ENCODE measurements at regions of chr9 and their contacts with region 1.

Region 1: DNA sequence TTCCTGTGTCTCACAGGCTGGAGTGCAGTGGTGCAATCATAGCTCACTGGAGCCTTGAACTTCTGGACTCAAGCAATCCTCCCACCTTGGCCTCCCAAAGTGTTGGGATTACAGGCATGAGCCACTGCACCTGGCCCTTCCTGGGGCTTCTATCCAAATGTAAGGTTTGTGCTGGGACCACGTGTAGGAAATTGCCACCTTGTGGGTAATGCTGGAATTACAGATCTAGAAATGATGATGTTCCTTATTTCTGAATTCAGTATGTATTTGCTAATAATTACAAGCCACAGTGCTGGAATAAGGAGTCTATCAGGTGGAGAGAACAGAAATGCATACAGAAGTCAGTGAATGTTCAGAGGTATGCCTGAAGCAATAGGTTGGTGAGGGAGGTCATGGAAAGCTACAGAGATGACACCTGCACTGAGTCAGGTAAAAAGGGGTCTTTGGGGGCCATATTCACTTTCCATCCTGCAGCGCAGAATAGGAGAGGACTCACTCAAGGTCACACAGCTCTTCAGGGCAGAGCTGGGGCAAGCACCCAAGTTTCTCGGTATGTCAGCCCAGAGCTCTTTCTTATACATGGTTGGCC is 8.8 kb upstream of the IGFBPL1 start:
- DNase-seq: no peak

Region 2: GRCh38 chr9:38233343-38233742 is 199.7 kb before region 1 on chr9:
- intact Hi-C with region 1: no loop called
- DNase-seq: no peak

Region 3: DNA sequence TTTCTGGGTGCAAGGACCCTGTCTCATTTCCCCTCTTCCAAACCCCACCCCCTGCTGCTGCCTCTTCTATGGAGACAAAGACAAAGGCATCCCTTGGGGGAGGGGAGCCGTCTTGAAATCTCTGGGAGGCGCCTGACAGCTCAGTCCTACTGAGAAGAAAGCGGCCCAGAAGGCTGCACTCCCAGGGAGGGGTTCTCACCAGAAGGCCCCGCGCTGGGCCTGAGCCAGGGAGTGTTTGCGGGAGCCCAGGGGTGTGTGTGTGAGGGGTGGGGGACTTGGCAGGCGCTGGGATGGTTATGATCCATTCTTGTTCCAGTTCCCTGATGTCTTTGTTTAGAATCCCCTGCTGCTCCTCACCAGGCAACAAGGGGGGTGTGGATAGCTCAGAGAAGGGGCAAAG is 86.2 kb before region 1 on chr9:
- intact Hi-C with region 1: no loop called
- DNase-seq: peak in 1 of 10 donors; percentile 32

Region 4: DNA sequence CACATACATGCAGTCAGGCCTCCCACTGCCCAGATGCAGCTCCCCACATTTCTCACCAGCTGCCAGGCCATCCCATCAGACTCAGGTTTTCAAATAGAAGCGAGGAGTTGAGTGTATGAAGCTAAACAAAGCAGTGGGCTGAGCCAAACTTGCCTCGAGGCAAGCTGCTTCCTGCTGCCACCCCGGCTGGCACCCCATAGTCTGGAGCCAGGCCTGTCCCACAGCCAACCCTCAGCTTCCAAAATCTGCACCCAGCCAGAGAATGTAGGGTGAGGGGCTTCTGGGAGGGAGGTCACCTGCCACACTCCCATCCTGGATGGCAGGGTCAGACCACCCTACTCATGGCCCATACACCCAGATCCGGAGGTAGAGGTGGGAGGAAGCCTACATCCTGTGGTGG is 62.8 kb before region 1 on chr9:
- intact Hi-C with region 1: no loop called
- DNase-seq: no peak

Region 5: GRCh38 chr9:38380872-38381534 is 52.0 kb before region 1 on chr9:
- intact Hi-C with region 1: loop called (anchors 10 kb)
- DNase-seq: no peak

Measured in posterior cingulate gyrus (tissue), 11 donors.